ENCODE measurements at regions of chr11 and their contacts with region 1.

Region 1: GRCh38 chr11:113705871-113706655 is at the start of gene TMPRSS5:
- DNase-seq: no peak
- H3K4me3 ChIP-seq: no peak within 1 kb of the TSS
- H3K27ac ChIP-seq: no peak within 1 kb of the TSS
- H3K4me1 ChIP-seq: no peaks in the 10 kb centered on the region
- H3K27me3 ChIP-seq: no peaks in the 10 kb centered on the region
- CTCF ChIP-seq: no peak
- POLR2A ChIP-seq: no peak
- total RNA-seq, gene TMPRSS5: 1.5 to 2.2 TPM

Region 2: GRCh38 chr11:112374486-112375140 is 1331.5 kb before region 1 on chr11:
- intact Hi-C with region 1: loop called (anchors 5 kb)
- DNase-seq: no peak
- H3K4me3 ChIP-seq: no peak overlapping the region
- H3K27ac ChIP-seq: no peak overlapping the region
- H3K4me1 ChIP-seq: no peaks in the 10 kb centered on the region
- H3K27me3 ChIP-seq: no peaks in the 10 kb centered on the region
- CTCF ChIP-seq: no peak
- POLR2A ChIP-seq: no peak